Naive thymus-derived CD4-positive, alpha-beta T cell (primary cell): ENCODE measurements at regions of chrX and their contacts with region 1.

Region 1: GRCh38 chrX:1246816-1247215 is 21.8 kb upstream of the CSF2RA start:
- DNase-seq: peak; percentile 55 to 88 (median 77)
- ATAC-seq: peak; percentile 81
- H3K4me3 ChIP-seq: no peak overlapping the region
- H3K4me3 Mint-ChIP-seq: peak overlapping the region in 9 of 10 donors; percentile 4 to 72 (median 63)
- H3K27ac ChIP-seq: no peak overlapping the region
- H3K27ac Mint-ChIP-seq: peak overlapping the region; percentile 44 to 84 (median 80)
- H3K4me1 ChIP-seq: peaks cover 6 to 18% of the 10 kb centered on the region in 2 donors
- H3K4me1 Mint-ChIP-seq: peaks cover 6 to 45% (median 38%) of the 10 kb centered on the region in 7 donors
- H3K27me3 ChIP-seq: no peaks in the 10 kb centered on the region
- H3K27me3 Mint-ChIP-seq: peaks cover 0 to 2% (median 0%) of the 10 kb centered on the region in 5 donors

Region 2: GRCh38 chrX:1205680-1206611 is 40.9 kb before region 1 on chrX:
- CTCF ChIA-PET with region 1: no interaction called
- POLR2A ChIA-PET with region 1: no interaction called
- intact Hi-C with region 1: loop called (anchors 1 kb)
- DNase-seq: peak; percentile 14 to 77 (median 69)
- ATAC-seq: peak; percentile 70
- H3K4me3 ChIP-seq: peak overlapping the region; percentile 56
- H3K4me3 Mint-ChIP-seq: peak overlapping the region; percentile 76 to 87 (median 83)
- H3K27ac ChIP-seq: no peak overlapping the region
- H3K27ac Mint-ChIP-seq: peak overlapping the region in 7 of 9 donors; percentile 22 to 68 (median 36)
- H3K4me1 ChIP-seq: peaks cover 6 to 11% of the 10 kb centered on the region in 2 donors
- H3K4me1 Mint-ChIP-seq: peaks cover 15 to 42% (median 32%) of the 10 kb centered on the region in 7 donors
- H3K27me3 ChIP-seq: no peaks in the 10 kb centered on the region
- H3K27me3 Mint-ChIP-seq: no peaks in the 10 kb centered on the region

Region 3: DNA sequence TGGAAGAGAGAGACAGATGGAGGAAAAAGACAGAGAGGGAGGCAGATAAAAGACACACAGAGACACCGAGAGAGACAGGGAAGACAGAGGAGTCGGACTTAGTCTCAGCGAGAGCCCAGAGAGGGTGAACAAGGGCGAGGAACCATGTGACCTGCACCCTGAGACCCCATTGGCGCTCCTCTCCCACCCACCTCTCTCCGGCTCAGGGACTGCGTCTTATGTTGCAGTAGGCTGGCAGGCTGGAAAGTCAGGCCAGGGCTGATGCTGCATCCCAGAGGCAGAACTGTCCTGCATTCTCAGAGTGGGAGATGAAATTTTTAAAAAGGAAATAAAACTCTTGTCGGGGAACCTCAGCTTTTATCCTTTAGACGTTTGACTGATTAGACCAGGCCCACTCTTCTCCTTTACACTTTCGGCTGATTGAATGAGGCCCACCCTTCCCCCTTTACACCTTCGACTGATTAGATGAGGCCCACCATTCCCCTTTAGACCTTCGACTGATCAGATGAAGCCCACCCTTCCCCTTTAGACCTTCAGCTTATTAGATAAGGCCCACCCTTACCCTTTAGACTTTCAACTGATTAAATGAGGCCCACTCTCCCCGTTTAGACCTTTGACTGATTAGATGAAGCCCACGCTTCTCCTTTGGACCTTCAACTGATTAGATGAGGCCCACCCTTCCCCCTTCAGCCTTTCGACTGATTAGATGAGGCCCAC is 60.3 kb after region 1 on chrX:
- CTCF ChIA-PET with region 1: no interaction called
- POLR2A ChIA-PET with region 1: no interaction called
- intact Hi-C with region 1: loop called in 1 of 2 experiments (anchors 5 kb)
- DNase-seq: no peak
- ATAC-seq: no peak
- H3K4me3 ChIP-seq: no peak overlapping the region
- H3K4me3 Mint-ChIP-seq: no peak overlapping the region
- H3K27ac ChIP-seq: no peak overlapping the region
- H3K27ac Mint-ChIP-seq: peak overlapping the region in 5 of 9 donors; percentile 4 to 71 (median 33)
- H3K4me1 ChIP-seq: no peaks in the 10 kb centered on the region
- H3K4me1 Mint-ChIP-seq: peaks cover 0 to 2% (median 0%) of the 10 kb centered on the region in 7 donors
- H3K27me3 ChIP-seq: no peaks in the 10 kb centered on the region
- H3K27me3 Mint-ChIP-seq: no peaks in the 10 kb centered on the region

Region 4: DNA sequence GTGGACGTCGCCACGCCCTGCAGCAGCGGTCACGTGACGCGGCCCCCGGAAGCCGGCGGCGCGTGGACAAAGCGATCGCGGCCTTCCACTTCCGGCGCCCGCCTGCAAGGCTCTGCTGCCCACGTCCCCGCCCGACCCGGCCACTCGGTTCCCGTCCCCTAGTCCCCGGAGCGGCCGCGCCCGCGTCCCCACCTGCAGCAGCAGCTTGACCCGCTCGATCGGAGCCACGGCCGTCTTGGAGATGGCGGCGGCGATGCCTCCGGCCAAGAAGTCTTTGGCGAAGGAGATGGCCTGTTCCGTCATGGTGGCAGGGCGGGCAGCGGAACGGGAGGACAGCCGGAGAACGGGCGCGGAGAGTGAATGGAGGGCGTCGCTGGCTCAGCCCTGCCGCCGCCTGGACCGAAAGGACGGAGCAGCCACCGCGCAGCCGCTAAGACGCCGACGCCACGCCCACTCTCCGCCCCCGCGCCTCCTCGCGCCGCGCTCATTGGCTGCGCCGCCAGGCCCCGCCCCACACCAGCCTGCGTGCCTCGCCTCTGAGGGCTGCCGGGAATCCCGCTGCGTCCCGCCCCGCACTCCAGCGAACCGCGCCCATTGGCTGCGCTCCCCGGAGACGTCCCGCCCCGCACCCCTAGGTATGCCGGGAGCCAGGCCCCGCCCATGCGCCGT is 145.0 kb after region 1 on chrX and contains the start of gene SLC25A6:
- CTCF ChIA-PET with region 1: no interaction called
- POLR2A ChIA-PET with region 1: no interaction called
- intact Hi-C with region 1: loop called (anchors 1 to 2 kb)
- DNase-seq: peak; percentile 97 to 100 (median 100)
- ATAC-seq: peak; percentile 96
- H3K4me3 ChIP-seq: peak within 1 kb of the TSS; percentile 94
- H3K4me3 Mint-ChIP-seq: peak within 1 kb of the TSS; percentile 78 to 95 (median 92)
- H3K27ac ChIP-seq: peak within 1 kb of the TSS; percentile 97
- H3K27ac Mint-ChIP-seq: peak within 1 kb of the TSS; percentile 84 to 98 (median 91)
- H3K4me1 ChIP-seq: peaks cover 25 to 33% of the 10 kb centered on the region in 2 donors
- H3K4me1 Mint-ChIP-seq: peaks cover 35 to 71% (median 52%) of the 10 kb centered on the region in 7 donors
- H3K27me3 ChIP-seq: no peaks in the 10 kb centered on the region
- H3K27me3 Mint-ChIP-seq: no peaks in the 10 kb centered on the region
- total RNA-seq, gene SLC25A6: 238 to 341 (median 270) TPM

Region 5: DNA sequence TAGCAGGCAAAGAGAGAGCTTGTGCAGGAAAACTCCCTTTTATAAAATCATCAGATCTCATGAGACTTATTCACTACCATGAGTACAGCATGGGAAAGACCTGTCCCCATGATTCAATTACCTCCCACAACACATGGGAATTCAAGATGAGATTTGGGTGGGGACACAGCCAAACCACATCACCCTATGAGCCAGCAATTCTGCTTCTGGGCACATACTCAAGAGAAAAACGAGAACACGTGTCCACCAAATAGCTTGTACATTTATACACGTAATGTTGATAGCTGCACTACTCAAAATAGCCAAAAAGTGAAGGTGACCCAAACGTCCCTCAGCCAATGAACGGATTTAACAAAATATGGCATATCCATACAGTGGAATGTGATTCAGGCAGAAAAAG is 1348.4 kb after region 1 on chrX:
- CTCF ChIA-PET with region 1: no interaction called
- POLR2A ChIA-PET with region 1: no interaction called
- intact Hi-C with region 1: loop called in 1 of 2 experiments (anchors 1 kb)
- DNase-seq: no peak
- ATAC-seq: no peak
- H3K4me3 ChIP-seq: no peak overlapping the region
- H3K4me3 Mint-ChIP-seq: no peak overlapping the region
- H3K27ac ChIP-seq: no peak overlapping the region
- H3K27ac Mint-ChIP-seq: peak overlapping the region in 4 of 9 donors; percentile 3 to 59 (median 23)
- H3K4me1 ChIP-seq: no peaks in the 10 kb centered on the region
- H3K4me1 Mint-ChIP-seq: peaks cover 0 to 20% (median 12%) of the 10 kb centered on the region in 7 donors
- H3K27me3 ChIP-seq: no peaks in the 10 kb centered on the region
- H3K27me3 Mint-ChIP-seq: no peaks in the 10 kb centered on the region